ENCODE measurements at regions of chr20 and their contacts with region 1.

Region 1: DNA sequence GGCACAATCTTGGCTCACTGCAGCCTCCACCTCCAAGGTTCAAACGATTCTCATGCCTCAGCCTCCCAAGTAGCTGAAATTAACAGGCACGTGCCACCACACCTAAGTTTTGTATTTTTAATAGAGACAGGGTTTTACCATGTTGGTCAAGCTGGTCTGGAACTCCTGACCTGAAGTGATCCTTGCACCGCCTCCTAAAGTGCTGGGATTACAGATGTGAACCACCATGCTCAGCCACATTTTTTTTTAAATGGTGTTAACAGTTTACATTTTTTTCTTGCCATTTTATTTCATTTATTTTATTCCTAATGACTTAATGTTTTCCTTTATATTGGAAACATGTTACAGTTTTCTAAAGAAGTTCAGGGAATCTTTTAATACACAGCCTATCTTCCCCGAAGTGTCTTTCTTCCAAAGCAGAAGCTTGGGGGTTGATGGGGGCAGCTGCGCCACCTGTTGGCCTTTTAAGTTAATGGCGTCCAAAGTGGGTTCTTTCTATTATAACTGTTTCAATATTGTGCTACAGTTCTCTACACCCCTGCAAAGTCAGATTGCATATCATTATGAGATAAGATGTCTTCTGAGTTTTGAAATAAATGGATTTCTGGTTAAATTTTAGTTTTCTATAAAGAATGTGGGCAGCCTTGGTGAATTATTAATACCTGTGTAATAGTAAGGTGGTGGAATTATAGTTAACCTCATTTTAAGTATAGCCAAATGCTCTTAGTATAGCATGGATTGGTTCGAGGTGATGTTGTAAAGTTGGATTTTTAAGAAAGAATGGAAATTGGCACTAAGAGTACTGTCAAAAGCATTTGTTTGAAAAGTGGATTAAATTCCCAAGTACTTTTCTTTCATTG is 42.0 kb upstream of the PLCG1 start:
- DNase-seq: peak; percentile 47
- H3K4me3 ChIP-seq: no peak overlapping the region
- H3K27ac ChIP-seq: no peak overlapping the region
- H3K4me1 ChIP-seq: no peaks in the 10 kb centered on the region
- H3K27me3 ChIP-seq: no peaks in the 10 kb centered on the region
- CTCF ChIP-seq: peak; percentile 61 to 82 (median 78)
- POLR2A ChIP-seq: no peak

Region 2: GRCh38 chr20:40848526-40848925 is 246.8 kb before region 1 on chr20:
- intact Hi-C with region 1: no loop called
- DNase-seq: no peak
- H3K4me3 ChIP-seq: no peak overlapping the region
- H3K27ac ChIP-seq: no peak overlapping the region
- H3K4me1 ChIP-seq: no peaks in the 10 kb centered on the region
- H3K27me3 ChIP-seq: no peaks in the 10 kb centered on the region
- CTCF ChIP-seq: no peak
- POLR2A ChIP-seq: no peak

Region 3: DNA sequence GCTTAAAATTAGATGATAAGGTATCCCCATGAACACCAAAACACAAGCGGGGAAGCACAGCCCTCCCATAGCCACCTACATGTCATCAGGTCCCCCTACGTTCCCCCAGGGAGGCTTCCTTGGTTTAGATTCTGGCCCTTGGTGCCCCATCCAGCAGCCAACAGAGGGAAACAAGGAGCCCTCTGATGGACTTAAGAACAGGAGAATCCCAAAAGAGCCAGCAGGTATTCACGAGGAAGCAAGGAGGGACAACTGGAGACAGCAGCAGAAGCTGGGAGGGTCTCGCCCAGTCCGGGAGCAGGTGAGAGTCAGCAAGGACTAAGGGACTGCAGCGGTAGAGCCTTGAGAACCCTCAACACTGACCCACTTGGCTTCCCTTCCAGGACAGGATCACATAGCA is 125.1 kb before region 1 on chr20:
- intact Hi-C with region 1: loop called (anchors 1 kb)
- DNase-seq: no peak
- H3K4me3 ChIP-seq: no peak overlapping the region
- H3K27ac ChIP-seq: no peak overlapping the region
- H3K4me1 ChIP-seq: no peaks in the 10 kb centered on the region
- H3K27me3 ChIP-seq: no peaks in the 10 kb centered on the region
- CTCF ChIP-seq: no peak
- POLR2A ChIP-seq: no peak

Region 4: GRCh38 chr20:40990542-40991120 is 104.7 kb before region 1 on chr20:
- intact Hi-C with region 1: loop called (anchors 2 kb)
- DNase-seq: peak; percentile 80
- H3K4me3 ChIP-seq: no peak overlapping the region
- H3K27ac ChIP-seq: no peak overlapping the region
- H3K4me1 ChIP-seq: no peaks in the 10 kb centered on the region
- H3K27me3 ChIP-seq: no peaks in the 10 kb centered on the region
- CTCF ChIP-seq: peak in 3 of 4 experiments; percentile 50 to 87 (median 83)
- POLR2A ChIP-seq: no peak

Measured in prostate gland (tissue), 2 donors.